ENCODE measurements at regions of chr3 and their contacts with region 1.

Region 1: DNA sequence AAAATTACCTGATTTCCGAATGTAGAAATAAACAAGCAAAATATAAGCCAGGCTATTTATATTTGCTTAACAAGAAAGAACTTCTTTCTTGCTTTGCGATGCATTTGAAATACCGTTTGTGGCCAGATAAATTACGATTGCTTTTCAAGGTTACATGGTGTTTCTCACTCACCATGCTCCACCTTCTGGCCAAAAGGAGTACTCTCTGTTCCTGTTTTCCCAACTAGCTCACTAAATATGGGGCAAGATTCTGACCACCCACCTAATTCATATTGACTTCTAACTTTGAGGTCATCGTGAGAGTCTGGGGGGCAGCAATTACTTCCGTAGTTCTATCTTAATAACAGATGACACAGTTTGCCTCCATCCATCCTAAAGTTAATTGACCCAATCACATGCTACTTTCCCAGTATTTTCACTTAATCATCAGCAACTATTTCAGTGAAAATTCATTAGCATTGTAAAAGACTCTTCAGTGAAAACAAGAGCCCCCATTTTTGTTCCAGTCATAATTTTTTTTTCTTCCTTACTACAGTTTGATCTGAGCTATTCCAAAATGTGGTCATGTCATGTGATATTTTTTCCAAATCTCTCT is 25.9 kb downstream of the ACP3 start:
- DNase-seq: peak; percentile 4
- H3K4me3 ChIP-seq: no peak overlapping the region
- H3K27me3 ChIP-seq: no peaks in the 10 kb centered on the region
- CTCF ChIP-seq: peak; percentile 80

Region 2: DNA sequence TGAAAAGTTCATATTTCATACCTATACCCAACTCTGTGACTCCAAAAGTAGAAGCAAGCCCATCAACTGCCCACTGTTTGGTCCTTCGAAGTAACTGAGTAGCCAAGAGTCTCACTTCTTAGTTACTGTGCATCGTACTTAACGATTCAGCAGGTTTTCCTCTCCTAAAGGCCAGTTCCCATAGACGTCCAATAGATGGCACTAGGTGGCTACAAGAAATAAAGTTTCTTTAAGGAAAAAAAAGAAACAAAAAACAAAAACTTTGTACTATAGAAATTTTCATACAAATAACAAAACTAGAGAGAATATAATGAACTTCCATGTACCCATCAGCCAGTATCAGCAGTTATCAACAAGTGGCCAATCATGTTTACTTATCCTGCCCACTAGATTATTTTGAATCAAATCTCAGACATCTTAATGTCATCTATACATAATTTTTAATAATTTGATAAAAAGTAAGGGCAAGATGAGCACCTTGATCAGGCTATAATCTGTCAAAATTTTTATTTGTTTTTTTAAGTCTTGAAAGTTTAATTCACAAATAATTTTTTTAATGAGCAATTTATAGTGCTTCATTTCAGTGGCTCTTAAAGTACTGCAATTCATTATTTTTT is 89.7 kb before region 1 on chr3:
- CTCF ChIA-PET with region 1: interaction called, 134 read pairs
- POLR2A ChIA-PET with region 1: no interaction called
- DNase-seq: no peak
- H3K4me3 ChIP-seq: no peak overlapping the region
- H3K27me3 ChIP-seq: no peaks in the 10 kb centered on the region
- CTCF ChIP-seq: peak; percentile 87

Region 3: GRCh38 chr3:132332508-132332907 is 10.6 kb before region 1 on chr3:
- CTCF ChIA-PET with region 1: interaction called, 17 read pairs
- POLR2A ChIA-PET with region 1: no interaction called
- DNase-seq: no peak
- H3K4me3 ChIP-seq: no peak overlapping the region
- H3K27me3 ChIP-seq: 0 out of 2 replicates have a peak, but pooled peaks cover 2% of the 10 kb centered on the region
- CTCF ChIP-seq: no peak

Region 4: GRCh38 chr3:132507657-132508056 is 164.5 kb after region 1 on chr3:
- CTCF ChIA-PET with region 1: no interaction called
- POLR2A ChIA-PET with region 1: no interaction called
- DNase-seq: no peak
- H3K4me3 ChIP-seq: no peak overlapping the region
- H3K27me3 ChIP-seq: no peaks in the 10 kb centered on the region
- CTCF ChIP-seq: no peak

Measured in BJ (cell line).